GM10248 (cell line): ENCODE measurements at regions of chr2 and their contacts with region 1.

Region 1: GRCh38 chr2:227406177-227407031 is 18.7 kb upstream of the SCYGR1 start:
- DNase-seq: peak; percentile 53
- CTCF ChIP-seq: peak; percentile 84

Region 2: DNA sequence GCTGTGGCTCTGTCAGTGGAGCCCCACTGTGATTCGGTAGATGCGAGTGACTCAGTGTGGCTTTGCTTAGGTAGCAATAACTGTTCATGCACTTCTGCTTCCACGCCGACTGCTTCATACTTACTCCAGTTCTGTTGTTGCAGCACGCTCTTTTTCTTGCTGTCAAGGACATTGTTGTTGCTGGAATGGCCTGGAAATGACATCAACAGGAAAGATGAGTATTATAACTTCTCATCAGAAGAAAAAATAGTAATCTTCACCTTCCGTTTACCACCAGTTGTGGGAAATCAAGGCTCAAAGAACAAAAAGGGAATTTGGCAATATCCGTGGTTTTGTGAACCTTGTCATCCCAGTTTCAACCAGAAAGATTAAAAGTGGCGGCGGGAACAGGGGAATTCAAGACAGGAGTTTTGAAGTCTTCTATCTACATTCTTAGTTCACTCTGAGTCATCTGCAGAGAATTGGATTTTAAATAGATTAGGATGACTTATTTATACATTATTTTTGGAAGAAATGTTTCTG is 35.6 kb before region 1 on chr2:
- CTCF ChIA-PET with region 1: no interaction called
- POLR2A ChIA-PET with region 1: no interaction called
- DNase-seq: no peak
- CTCF ChIP-seq: no peak

Region 3: GRCh38 chr2:227386630-227387029 is 19.8 kb before region 1 on chr2:
- CTCF ChIA-PET with region 1: interaction called, 39 read pairs
- POLR2A ChIA-PET with region 1: no interaction called
- DNase-seq: no peak
- CTCF ChIP-seq: no peak

Region 4: DNA sequence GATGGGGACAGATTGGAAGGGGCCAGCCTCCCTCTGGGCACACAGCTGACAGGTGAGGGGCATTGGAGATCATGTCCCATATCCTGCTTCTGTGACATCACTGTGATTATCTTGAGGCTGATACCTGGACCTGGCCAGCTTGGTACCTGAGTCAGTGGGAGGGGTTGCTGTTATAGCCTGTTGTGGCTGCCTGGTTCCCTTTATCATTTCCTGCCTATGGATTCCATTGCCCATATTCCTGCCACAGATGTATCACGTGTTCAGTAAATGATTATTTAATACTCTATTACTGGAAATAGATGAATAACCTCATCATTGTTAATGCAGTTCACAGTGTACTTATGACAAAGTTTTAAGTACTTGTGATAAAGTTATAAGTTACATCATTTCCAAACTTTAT is 10.8 kb before region 1 on chr2:
- CTCF ChIA-PET with region 1: interaction called, 39 read pairs
- POLR2A ChIA-PET with region 1: no interaction called
- DNase-seq: no peak
- CTCF ChIP-seq: no peak

Region 5: GRCh38 chr2:227766373-227766883 is 360.0 kb after region 1 on chr2:
- CTCF ChIA-PET with region 1: interaction called, 21 read pairs
- POLR2A ChIA-PET with region 1: no interaction called
- DNase-seq: peak; percentile 79
- CTCF ChIP-seq: peak; percentile 89